CD14-positive monocyte (primary cell): ENCODE measurements at regions of chr5 and their contacts with region 1.

Region 1: DNA sequence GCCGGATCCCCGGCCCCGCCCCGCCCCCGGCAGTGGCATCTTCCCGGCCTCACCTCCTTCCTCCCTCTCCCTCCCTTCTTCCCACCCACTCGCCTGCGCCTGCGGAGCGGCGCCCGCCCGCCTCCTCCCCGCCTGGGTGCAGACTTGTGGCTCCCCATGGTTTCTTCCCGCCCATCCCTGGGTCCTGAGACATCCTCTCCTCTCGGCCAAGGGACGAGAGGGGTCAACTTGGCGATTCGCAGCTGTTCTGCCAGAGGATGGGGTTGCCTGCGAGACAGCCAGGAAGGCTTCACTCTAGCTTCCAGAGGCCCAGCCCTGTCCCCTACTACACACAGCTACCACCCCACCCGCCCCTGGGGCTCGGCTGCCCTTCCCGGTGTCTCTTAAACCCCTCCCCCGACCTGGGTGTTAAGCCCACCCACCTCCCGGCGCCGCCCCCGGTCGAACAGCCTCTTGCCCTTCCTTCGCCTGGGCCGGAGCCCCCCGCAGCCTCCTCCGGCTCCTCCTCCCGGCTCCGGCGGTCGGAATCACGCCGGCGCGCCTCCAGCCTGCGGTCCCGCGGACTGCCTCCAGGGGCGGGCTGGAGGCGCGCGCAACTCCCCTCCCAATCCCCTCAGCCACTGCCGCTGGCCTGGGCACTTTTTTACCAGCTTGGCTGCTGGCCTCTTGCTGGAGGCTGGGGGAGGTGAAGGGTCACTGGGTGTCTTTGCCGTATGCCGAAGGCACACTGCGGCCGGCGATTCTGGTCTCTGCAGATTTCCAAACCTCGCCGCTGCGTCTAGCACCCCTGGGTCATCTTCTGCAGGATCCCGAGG is 1.9 kb downstream of the JADE2 start:
- DNase-seq: peak; percentile 60 to 69 (median 60)
- H3K4me3 ChIP-seq: peak overlapping the region; percentile 72 to 98 (median 93)
- H3K4me3 Mint-ChIP-seq: peak overlapping the region; percentile 90 to 97
- H3K27ac ChIP-seq: peak overlapping the region; percentile 23 to 95
- H3K27ac Mint-ChIP-seq: peak overlapping the region; percentile 41 to 89 (median 86)
- H3K4me1 ChIP-seq: peaks cover 14 to 25% of the 10 kb centered on the region in 2 donors
- H3K4me1 Mint-ChIP-seq: peaks cover 23% of the 10 kb centered on the region
- H3K27me3 ChIP-seq: no peaks in the 10 kb centered on the region
- H3K27me3 Mint-ChIP-seq: peaks cover 1 to 7% (median 1%) of the 10 kb centered on the region in 3 donors
- CTCF ChIP-seq: peak; percentile 65

Region 2: DNA sequence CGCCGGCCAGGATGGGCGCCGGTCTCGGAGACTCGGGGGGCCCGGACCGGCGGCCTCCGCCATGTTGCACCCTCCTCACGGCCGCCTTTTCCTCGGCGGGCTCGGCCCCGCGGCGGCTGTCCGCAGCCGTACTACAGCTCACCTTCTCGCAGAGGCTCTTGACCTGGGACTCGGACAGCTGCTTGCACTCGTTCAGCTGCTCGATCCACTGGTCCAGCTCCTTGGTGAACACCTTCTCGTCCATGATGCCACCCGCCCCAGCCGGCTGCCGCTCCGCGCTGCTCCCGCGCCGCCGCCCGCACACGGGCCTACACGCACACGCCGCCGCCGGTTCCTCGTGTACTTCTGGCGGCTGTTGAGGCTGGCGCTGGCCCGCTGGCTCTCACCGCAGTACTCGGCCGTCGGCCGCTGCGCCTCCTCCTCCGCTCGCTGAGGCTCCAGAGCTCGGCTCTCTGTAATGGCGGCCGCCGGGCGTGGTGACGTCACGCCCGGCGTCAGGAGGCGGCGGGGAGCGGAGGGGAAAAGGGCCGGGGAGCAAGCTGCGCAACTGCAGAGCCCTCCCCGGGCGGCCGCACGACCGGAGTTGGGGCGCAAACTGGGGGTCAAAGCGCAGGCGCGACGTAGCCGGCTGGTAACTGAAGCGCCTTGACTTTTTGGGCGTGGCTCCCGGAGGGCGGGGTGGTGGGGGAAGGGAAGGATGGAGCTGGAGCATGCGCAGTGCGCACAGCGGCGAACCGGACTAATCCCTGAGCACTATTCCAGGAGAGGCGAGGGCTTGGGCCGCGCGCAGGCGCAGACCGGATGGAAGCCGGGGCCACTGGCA is 301.5 kb before region 1 on chr5 and contains the start of gene PPP2CA:
- intact Hi-C with region 1: loop called in 1 of 2 experiments (anchors 10 kb)
- DNase-seq: peak; percentile 97 to 99 (median 99)
- H3K4me3 ChIP-seq: peak within 1 kb of the TSS; percentile 84 to 96 (median 88)
- H3K4me3 Mint-ChIP-seq: peak within 1 kb of the TSS; percentile 94 to 97
- H3K27ac ChIP-seq: peak within 1 kb of the TSS; percentile 97 to 99
- H3K27ac Mint-ChIP-seq: peak within 1 kb of the TSS; percentile 97 to 99 (median 99)
- H3K4me1 ChIP-seq: peaks cover 32 to 47% of the 10 kb centered on the region in 2 donors
- H3K4me1 Mint-ChIP-seq: peaks cover 33% of the 10 kb centered on the region
- H3K27me3 ChIP-seq: no peaks in the 10 kb centered on the region
- H3K27me3 Mint-ChIP-seq: no peaks in the 10 kb centered on the region
- CTCF ChIP-seq: peak; percentile 18
- polyA plus RNA-seq, gene PPP2CA: 82.5 to 245 (median 225) TPM

Region 3: DNA sequence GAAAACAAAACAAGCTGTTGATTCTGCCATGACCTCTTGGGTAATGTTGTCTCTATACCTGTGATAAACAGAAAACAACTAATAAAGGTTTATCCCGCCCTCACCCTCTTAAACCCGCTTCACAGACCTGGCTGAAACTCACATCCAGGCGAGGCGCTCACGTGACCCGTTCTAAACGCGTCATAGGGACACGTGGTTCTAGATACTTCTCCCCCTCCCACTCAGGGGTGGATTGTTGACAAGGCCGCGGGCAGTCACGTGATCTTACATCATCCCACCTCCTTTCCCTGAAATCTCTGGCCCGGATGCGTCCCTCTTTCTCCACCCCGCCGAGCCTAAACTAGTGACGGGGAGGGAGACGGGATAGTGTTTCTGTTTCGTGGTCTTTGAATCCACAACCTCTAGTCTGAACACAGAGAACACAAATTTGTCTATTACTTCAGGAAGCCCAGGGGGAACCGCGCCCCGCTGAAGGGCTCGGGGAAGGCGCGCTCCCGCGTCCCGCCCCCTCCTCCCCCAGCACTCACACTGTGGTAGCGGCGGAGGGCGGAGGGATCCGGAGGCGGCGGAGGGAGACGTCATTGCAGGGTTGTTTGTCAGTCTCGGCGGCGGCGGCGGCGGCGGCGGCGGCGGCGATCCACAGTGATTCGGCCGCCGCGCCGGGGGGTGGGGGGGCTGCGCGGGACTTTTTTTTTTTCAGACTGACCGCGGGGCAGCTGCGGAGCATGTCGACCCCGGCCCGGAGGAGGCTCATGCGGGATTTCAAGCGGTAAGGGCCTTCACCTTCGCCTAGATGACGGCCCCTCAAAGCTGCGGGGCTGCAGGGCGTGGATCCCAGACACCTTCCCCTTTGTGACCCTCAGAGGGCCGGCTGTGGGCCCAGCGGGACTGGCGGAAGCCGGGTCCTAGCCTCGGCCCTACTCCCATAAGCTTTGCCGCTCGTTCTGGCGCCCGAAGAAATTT is 156.2 kb before region 1 on chr5 and contains the start of gene UBE2B:
- intact Hi-C with region 1: loop called (anchors 5 kb)
- DNase-seq: peak; percentile 99 to 100 (median 99)
- H3K4me3 ChIP-seq: peak within 1 kb of the TSS; percentile 80 to 100 (median 95)
- H3K4me3 Mint-ChIP-seq: peak within 1 kb of the TSS; percentile 95 to 98
- H3K27ac ChIP-seq: peak within 1 kb of the TSS; percentile 98 to 99
- H3K27ac Mint-ChIP-seq: peak within 1 kb of the TSS; percentile 98 to 100 (median 99)
- H3K4me1 ChIP-seq: peaks cover 28 to 30% of the 10 kb centered on the region in 2 donors
- H3K4me1 Mint-ChIP-seq: peaks cover 41% of the 10 kb centered on the region
- H3K27me3 ChIP-seq: no peaks in the 10 kb centered on the region
- H3K27me3 Mint-ChIP-seq: peaks cover 0 to 5% (median 3%) of the 10 kb centered on the region in 3 donors
- CTCF ChIP-seq: no peak
- polyA plus RNA-seq, gene UBE2B: 30.6 to 68.6 (median 43.4) TPM

Region 4: GRCh38 chr5:134411546-134412266 is 115.6 kb before region 1 on chr5 and contains the start of gene CDKN2AIPNL:
- intact Hi-C with region 1: loop called in 1 of 2 experiments (anchors 5 kb)
- DNase-seq: peak; percentile 72 to 80 (median 75)
- H3K4me3 ChIP-seq: peak within 1 kb of the TSS; percentile 60 to 87 (median 86)
- H3K4me3 Mint-ChIP-seq: peak within 1 kb of the TSS; percentile 89 to 96
- H3K27ac ChIP-seq: peak within 1 kb of the TSS; percentile 0 to 56
- H3K27ac Mint-ChIP-seq: peak within 1 kb of the TSS; percentile 75 to 88 (median 85)
- H3K4me1 ChIP-seq: peaks cover 17 to 21% of the 10 kb centered on the region in 2 donors
- H3K4me1 Mint-ChIP-seq: peaks cover 29% of the 10 kb centered on the region
- H3K27me3 ChIP-seq: no peaks in the 10 kb centered on the region
- H3K27me3 Mint-ChIP-seq: peaks cover 0 to 3% (median 2%) of the 10 kb centered on the region in 3 donors
- CTCF ChIP-seq: peak; percentile 72
- polyA plus RNA-seq, gene CDKN2AIPNL: 6.9 to 20.0 (median 15.0) TPM

Region 5: GRCh38 chr5:134436523-134437339 is 90.6 kb before region 1 on chr5:
- intact Hi-C with region 1: loop called in 1 of 2 experiments (anchors 10 kb)
- DNase-seq: peak; percentile 82 to 91 (median 85)
- H3K4me3 ChIP-seq: peak overlapping the region in 2 of 3 experiments; percentile 1 to 54
- H3K4me3 Mint-ChIP-seq: peak overlapping the region; percentile 59 to 86
- H3K27ac ChIP-seq: peak overlapping the region; percentile 13 to 78
- H3K27ac Mint-ChIP-seq: peak overlapping the region; percentile 84 to 94 (median 89)
- H3K4me1 ChIP-seq: peaks cover 11 to 12% of the 10 kb centered on the region in 2 donors
- H3K4me1 Mint-ChIP-seq: peaks cover 23% of the 10 kb centered on the region
- H3K27me3 ChIP-seq: no peaks in the 10 kb centered on the region
- H3K27me3 Mint-ChIP-seq: peaks cover 1 to 6% (median 3%) of the 10 kb centered on the region in 3 donors
- CTCF ChIP-seq: no peak

Region 6: DNA sequence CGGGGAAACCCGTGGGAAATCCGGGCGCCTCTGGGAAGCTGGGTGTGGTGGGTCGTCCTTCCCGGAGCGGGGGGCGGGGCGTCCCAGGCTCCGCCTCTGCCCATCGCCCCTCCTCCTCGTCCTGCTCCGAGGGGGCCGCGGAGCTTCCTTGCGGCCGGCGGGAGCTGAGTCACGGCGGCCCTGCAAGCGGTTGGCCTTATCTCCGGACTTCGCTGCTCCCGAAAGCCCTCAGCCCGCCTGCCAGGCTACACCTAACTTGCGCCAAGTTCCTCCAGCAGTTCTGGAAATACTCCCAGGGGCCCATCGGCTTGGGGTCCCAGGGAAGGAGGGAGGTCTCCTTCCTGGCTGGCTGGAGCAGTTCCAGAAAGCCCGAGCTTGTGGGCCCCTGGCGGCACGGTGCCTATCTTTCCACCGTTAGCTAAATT is 61.5 kb before region 1 on chr5:
- intact Hi-C with region 1: loop called in 1 of 2 experiments (anchors 10 kb)
- DNase-seq: peak; percentile 50 to 84 (median 63)
- H3K4me3 ChIP-seq: peak overlapping the region; percentile 43 to 81 (median 61)
- H3K4me3 Mint-ChIP-seq: peak overlapping the region; percentile 80 to 91
- H3K27ac ChIP-seq: peak overlapping the region; percentile 74 to 90
- H3K27ac Mint-ChIP-seq: peak overlapping the region; percentile 82 to 94 (median 91)
- H3K4me1 ChIP-seq: peaks cover 35 to 38% of the 10 kb centered on the region in 2 donors
- H3K4me1 Mint-ChIP-seq: peaks cover 34% of the 10 kb centered on the region
- H3K27me3 ChIP-seq: no peaks in the 10 kb centered on the region
- H3K27me3 Mint-ChIP-seq: peaks cover 1 to 9% (median 2%) of the 10 kb centered on the region in 3 donors
- CTCF ChIP-seq: no peak

Region 7: DNA sequence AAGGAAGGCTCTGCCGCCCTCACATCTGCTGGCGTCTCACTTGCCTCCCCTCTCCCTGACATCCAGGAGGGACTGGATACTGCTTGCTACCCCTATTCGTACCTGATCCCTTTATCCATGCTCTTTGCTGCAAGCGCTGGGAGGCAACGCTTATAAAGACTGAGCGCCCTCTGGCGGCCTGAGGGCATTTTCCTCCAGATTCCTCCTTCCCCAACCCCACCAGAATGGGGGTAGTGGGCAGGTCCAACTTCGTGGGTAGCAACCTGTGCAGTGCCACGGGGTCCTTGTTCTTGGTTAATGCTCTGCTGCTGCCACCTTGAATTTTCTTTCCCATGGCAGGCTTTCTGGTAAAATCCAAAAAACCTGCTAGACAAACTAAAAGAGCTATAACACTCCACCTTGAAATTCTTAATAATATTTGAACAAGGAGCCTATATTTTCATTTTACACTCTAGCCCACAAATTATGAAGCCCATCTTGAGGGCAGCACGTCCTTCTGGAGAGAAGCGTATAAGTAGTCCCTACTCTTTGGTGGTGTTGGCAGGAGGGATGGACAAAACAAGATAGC is 50.5 kb after region 1 on chr5:
- intact Hi-C with region 1: loop called (anchors 5 kb)
- DNase-seq: peak; percentile 67 to 79 (median 72)
- H3K4me3 ChIP-seq: no peak overlapping the region
- H3K4me3 Mint-ChIP-seq: no peak overlapping the region
- H3K27ac ChIP-seq: no peak overlapping the region
- H3K27ac Mint-ChIP-seq: peak overlapping the region in 2 of 7 donors; percentile 13 to 46
- H3K4me1 ChIP-seq: no peaks in the 10 kb centered on the region
- H3K4me1 Mint-ChIP-seq: peaks cover 2% of the 10 kb centered on the region
- H3K27me3 ChIP-seq: no peaks in the 10 kb centered on the region
- H3K27me3 Mint-ChIP-seq: no peaks in the 10 kb centered on the region
- CTCF ChIP-seq: peak; percentile 91